ENCODE measurements at regions of chr1 and their contacts with region 1.

Region 1: DNA sequence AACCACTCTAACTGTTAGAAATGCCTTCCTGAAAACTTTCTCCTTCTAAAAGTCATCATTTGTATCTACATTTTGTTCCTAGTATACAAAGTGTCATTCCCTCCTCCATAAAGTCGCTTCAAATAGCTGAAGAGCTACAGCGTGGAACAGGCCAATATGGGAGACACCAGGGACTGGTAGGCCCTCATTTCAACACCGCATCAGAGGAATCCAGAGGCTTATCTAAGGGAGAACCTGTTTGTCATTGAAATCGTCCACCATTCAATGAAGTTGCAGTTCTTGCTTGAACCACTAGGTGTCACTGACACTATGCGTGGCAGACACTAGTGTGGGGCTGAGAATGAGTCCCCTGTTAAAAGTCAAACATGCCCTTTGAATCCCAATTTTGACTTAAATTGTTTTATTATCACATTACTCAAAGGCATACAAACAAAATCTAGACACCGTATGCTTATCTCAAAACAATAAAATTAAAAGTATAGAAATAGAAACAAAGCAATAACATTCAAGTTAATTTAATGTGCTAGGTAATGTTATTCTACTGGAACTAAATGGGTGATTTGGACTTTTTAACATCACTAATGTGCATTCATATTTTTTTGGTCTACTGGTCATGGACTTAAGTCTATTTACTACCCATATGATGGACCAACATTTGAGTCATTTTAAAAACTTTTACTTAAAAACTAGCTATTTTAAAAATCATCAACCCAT is 182.3 kb downstream of the FCRL5 start:
- DNase-seq: peak; percentile 72
- ATAC-seq: peak; percentile 72
- H3K4me3 ChIP-seq: no peak overlapping the region
- H3K4me3 Mint-ChIP-seq: no peak overlapping the region
- H3K27ac ChIP-seq: no peak overlapping the region
- H3K27ac Mint-ChIP-seq: no peak overlapping the region
- H3K4me1 ChIP-seq: no peaks in the 10 kb centered on the region
- H3K4me1 Mint-ChIP-seq: no peaks in the 10 kb centered on the region
- H3K27me3 ChIP-seq: no peaks in the 10 kb centered on the region
- H3K27me3 Mint-ChIP-seq: peaks cover 5% of the 10 kb centered on the region
- CTCF ChIP-seq: peak; percentile 97

Region 2: GRCh38 chr1:157490467-157491165 is 120.7 kb after region 1 on chr1:
- CTCF ChIA-PET with region 1: interaction called, 16 read pairs
- POLR2A ChIA-PET with region 1: no interaction called
- intact Hi-C with region 1: loop called (anchors 1 kb)
- DNase-seq: peak; percentile 73
- ATAC-seq: peak; percentile 47
- H3K4me3 ChIP-seq: no peak overlapping the region
- H3K4me3 Mint-ChIP-seq: no peak overlapping the region
- H3K27ac ChIP-seq: no peak overlapping the region
- H3K27ac Mint-ChIP-seq: no peak overlapping the region
- H3K4me1 ChIP-seq: peaks cover 0 to 5% of the 10 kb centered on the region in 2 donors
- H3K4me1 Mint-ChIP-seq: peaks cover 2% of the 10 kb centered on the region
- H3K27me3 ChIP-seq: peaks cover 0 to 2% (median 0%) of the 10 kb centered on the region in 4 experiments
- H3K27me3 Mint-ChIP-seq: no peaks in the 10 kb centered on the region
- CTCF ChIP-seq: peak; percentile 75

Region 3: GRCh38 chr1:157496121-157496526 is 126.2 kb after region 1 on chr1:
- CTCF ChIA-PET with region 1: interaction called, 16 read pairs
- POLR2A ChIA-PET with region 1: no interaction called
- intact Hi-C with region 1: loop called (anchors 2 kb)
- DNase-seq: peak; percentile 75
- ATAC-seq: peak; percentile 78
- H3K4me3 ChIP-seq: no peak overlapping the region
- H3K4me3 Mint-ChIP-seq: peak overlapping the region; percentile 30
- H3K27ac ChIP-seq: no peak overlapping the region
- H3K27ac Mint-ChIP-seq: no peak overlapping the region
- H3K4me1 ChIP-seq: peaks cover 22 to 36% of the 10 kb centered on the region in 2 donors
- H3K4me1 Mint-ChIP-seq: peaks cover 31% of the 10 kb centered on the region
- H3K27me3 ChIP-seq: peaks cover 0 to 2% (median 0%) of the 10 kb centered on the region in 4 experiments
- H3K27me3 Mint-ChIP-seq: no peaks in the 10 kb centered on the region
- CTCF ChIP-seq: peak; percentile 95

Region 4: GRCh38 chr1:157505481-157506272 is 135.7 kb after region 1 on chr1:
- CTCF ChIA-PET with region 1: interaction called, 13 read pairs
- POLR2A ChIA-PET with region 1: no interaction called
- intact Hi-C with region 1: loop called (anchors 1 kb)
- DNase-seq: peak; percentile 77
- ATAC-seq: peak; percentile 96
- H3K4me3 ChIP-seq: peak overlapping the region in 1 of 5 experiments; percentile 18
- H3K4me3 Mint-ChIP-seq: peak overlapping the region; percentile 73
- H3K27ac ChIP-seq: no peak overlapping the region
- H3K27ac Mint-ChIP-seq: peak overlapping the region; percentile 32
- H3K4me1 ChIP-seq: peaks cover 20 to 30% of the 10 kb centered on the region in 2 donors
- H3K4me1 Mint-ChIP-seq: peaks cover 39% of the 10 kb centered on the region
- H3K27me3 ChIP-seq: no peaks in the 10 kb centered on the region
- H3K27me3 Mint-ChIP-seq: no peaks in the 10 kb centered on the region
- CTCF ChIP-seq: peak; percentile 86

Region 5: GRCh38 chr1:157862114-157863070 is 492.4 kb after region 1 on chr1:
- CTCF ChIA-PET with region 1: interaction called, 3 read pairs
- POLR2A ChIA-PET with region 1: no interaction called
- intact Hi-C with region 1: loop called (anchors 10 kb)
- DNase-seq: peak; percentile 34
- ATAC-seq: peak; percentile 24
- H3K4me3 ChIP-seq: no peak overlapping the region
- H3K4me3 Mint-ChIP-seq: no peak overlapping the region
- H3K27ac ChIP-seq: no peak overlapping the region
- H3K27ac Mint-ChIP-seq: peak overlapping the region; percentile 32
- H3K4me1 ChIP-seq: peaks cover 6 to 7% of the 10 kb centered on the region in 2 donors
- H3K4me1 Mint-ChIP-seq: peaks cover 19% of the 10 kb centered on the region
- H3K27me3 ChIP-seq: no peaks in the 10 kb centered on the region
- H3K27me3 Mint-ChIP-seq: no peaks in the 10 kb centered on the region
- CTCF ChIP-seq: no peak

Region 6: DNA sequence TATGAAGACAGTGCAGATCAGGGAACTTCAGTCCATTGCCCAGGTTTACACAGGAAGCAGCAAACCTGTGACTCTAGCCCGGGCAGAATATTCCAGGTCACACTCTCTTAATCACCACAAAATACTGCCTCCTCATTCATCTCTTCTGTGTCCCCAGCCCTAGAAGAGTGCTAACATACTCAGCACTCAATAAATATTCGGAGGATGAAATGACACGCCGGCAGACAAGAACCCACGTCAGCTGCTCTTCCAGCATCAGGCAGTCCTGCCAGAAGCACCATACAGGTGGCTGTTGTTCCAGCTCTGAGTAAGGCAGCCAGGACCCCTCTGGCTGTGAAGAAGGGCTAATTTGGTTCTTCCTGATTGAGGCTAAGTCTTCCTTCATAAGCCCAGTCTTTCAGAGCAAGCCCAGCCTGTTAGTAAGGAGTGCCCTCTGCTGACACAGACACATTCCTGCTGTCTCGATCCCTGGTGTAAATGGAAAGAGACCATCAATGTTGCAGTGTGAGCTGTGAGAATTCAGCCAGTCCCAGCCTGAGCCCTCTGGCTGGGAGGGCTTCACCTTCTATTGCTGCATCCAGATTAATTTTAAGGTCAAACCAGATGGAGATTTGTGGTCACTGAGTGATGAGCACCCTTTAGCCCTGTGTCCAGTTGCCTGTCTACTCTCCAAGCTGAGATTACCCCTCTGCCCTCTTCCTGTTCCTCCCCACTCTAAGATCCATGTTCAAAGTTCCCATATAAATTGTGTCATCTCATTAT is 578.5 kb after region 1 on chr1:
- CTCF ChIA-PET with region 1: interaction called, 7 read pairs
- POLR2A ChIA-PET with region 1: no interaction called
- intact Hi-C with region 1: loop called (anchors 1 kb)
- DNase-seq: peak; percentile 63
- ATAC-seq: peak; percentile 53
- H3K4me3 ChIP-seq: no peak overlapping the region
- H3K4me3 Mint-ChIP-seq: no peak overlapping the region
- H3K27ac ChIP-seq: no peak overlapping the region
- H3K27ac Mint-ChIP-seq: no peak overlapping the region
- H3K4me1 ChIP-seq: peaks cover 17 to 18% of the 10 kb centered on the region in 2 donors
- H3K4me1 Mint-ChIP-seq: peaks cover 27% of the 10 kb centered on the region
- H3K27me3 ChIP-seq: peaks cover 0 to 8% (median 0%) of the 10 kb centered on the region in 4 experiments
- H3K27me3 Mint-ChIP-seq: peaks cover 12% of the 10 kb centered on the region
- CTCF ChIP-seq: peak; percentile 67

Region 7: DNA sequence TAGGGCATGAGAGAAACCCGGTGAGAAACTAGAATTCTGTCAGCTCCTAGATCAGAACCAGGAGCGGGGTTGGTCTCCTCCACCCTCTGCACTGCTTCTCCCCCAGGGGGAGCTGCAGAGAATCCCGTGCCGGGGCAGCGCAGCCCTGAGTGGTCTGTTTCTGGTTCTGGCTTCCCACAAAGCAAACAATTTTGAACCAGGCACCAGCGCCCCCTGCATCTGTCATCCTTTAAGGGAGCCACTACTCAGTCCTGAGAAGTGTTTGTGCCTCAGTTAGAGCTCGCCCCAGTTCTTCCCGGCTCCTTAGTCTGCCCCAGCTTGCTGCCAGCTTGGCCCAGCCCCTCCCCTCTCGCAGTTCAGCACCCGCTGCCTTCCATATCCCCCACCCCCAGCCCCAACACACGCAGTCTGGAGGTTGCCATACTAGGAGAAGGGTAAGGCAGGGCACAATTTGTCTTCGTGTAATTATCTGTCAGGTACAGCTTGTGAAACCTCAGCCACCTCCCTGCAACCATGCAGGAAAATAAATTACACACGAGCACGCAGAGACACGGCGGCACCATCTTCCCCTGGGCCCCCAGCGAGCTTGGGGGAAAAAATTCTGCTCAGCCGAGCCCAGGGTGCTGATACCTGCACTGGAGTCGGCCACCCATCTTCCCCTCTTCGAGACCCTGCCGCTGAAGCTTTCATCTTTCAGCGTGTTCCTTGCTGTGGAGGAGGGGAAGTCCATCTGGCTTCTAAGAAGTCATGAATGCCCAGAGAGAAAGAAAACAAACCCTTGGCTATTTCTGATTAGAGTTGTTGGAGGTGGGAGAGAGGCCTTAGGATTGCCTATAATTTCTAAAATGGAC is 748.1 kb after region 1 on chr1:
- CTCF ChIA-PET with region 1: interaction called, 17 read pairs
- POLR2A ChIA-PET with region 1: no interaction called
- intact Hi-C with region 1: no loop called
- DNase-seq: peak; percentile 76
- ATAC-seq: peak; percentile 58
- H3K4me3 ChIP-seq: peak overlapping the region in 3 of 5 experiments; percentile 15 to 44 (median 32)
- H3K4me3 Mint-ChIP-seq: peak overlapping the region; percentile 77
- H3K27ac ChIP-seq: no peak overlapping the region
- H3K27ac Mint-ChIP-seq: no peak overlapping the region
- H3K4me1 ChIP-seq: peaks cover 22 to 32% of the 10 kb centered on the region in 2 donors
- H3K4me1 Mint-ChIP-seq: peaks cover 28% of the 10 kb centered on the region
- H3K27me3 ChIP-seq: peaks cover 0 to 38% (median 16%) of the 10 kb centered on the region in 4 experiments
- H3K27me3 Mint-ChIP-seq: peaks cover 35% of the 10 kb centered on the region
- CTCF ChIP-seq: peak; percentile 85

Measured in B cell (primary cell).